ENCODE measurements at regions of chr3 and their contacts with region 1.

Region 1: GRCh38 chr3:39499651-39500240 is 32.3 kb downstream of the MOBP start:
- DNase-seq: no peak

Region 2: DNA sequence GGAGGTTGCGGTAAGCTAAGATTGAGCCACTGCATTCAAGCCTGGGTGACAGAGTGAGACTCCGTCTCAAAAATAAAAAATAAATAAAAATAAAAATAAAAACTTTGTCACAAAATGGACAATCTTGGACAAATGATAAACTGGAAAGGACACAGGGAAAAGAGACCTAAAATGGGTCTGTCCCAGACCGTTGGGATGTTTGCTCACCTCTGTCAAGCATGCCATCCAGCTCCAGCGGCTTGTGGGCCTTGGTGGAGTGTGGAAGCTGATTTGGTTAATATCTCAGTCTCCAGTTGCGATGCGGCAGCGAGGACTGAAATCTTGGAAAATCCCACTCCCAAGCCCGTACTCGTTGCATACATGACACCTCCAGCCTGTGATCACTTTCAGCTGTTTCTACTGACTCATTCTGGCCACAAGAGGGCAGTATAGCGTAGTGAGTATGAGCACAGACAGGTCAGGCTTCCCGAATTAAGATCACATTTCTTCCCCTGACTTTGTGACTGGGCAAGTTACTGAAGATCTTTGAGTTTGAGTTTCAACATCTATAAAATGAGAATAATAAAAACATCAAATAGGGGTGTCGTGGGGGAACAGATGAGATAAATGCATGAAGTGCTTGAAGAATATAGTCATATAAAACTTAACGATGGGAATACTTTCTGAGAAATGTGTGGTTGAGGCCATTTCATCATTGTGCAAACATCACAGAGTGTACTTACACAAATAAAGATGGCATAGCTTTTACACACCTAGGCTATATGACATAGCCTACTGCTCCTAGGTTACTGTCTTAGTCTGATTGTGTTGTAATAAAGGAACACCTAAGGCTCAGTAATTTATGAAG is 51.9 kb before region 1 on chr3:
- CTCF ChIA-PET with region 1: interaction called, 30 read pairs
- POLR2A ChIA-PET with region 1: no interaction called
- DNase-seq: peak; percentile 83

Region 3: GRCh38 chr3:39485547-39485946 is 14.2 kb before region 1 on chr3:
- CTCF ChIA-PET with region 1: no interaction called
- POLR2A ChIA-PET with region 1: no interaction called
- DNase-seq: no peak

Region 4: GRCh38 chr3:39515681-39516441 is 16.1 kb after region 1 on chr3:
- CTCF ChIA-PET with region 1: no interaction called
- POLR2A ChIA-PET with region 1: no interaction called
- DNase-seq: no peak